CD8-positive, alpha-beta T cell (primary cell): ENCODE measurements at regions of chr1 and their contacts with region 1.

Region 1: DNA sequence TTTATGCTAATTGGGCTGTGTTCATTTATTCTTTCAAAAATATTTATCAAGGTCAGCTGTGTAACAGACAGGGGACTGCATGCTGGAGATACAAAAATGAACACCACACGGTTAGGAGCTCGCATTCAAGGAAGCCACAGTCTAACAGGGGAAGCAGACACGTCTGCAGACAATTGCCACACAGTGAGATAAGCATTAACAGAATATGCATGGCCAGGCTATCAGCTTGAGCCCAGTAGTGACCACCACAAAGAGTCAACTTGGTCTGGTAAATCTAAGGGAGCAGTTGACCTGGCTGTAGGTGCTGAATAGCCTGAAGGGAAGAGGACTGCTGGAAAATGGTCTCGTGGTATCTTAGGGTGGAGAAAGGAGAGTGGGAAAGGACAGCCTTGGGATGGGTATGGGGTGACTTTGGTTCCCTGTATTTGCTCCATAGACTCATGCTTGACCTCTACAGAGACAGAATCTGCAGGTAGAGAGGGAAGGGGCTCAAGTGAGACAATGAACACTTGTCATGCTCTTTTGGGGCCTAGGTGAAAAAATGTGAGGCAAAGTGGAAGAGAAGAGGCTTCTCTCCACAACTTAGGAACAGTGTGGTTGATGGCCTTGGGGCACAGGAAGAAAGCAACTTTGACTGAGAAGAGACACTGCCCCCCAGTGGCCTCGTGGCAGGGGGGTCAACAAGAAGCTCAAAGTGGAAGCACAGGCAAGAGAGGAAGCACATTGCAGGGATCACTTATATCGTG is 7.6 kb upstream of the NPL start:
- DNase-seq: peak; percentile 39 to 77 (median 66)
- ATAC-seq: peak; percentile 80
- H3K4me3 ChIP-seq: no peak overlapping the region
- H3K4me3 Mint-ChIP-seq: no peak overlapping the region
- H3K27ac ChIP-seq: no peak overlapping the region
- H3K27ac Mint-ChIP-seq: no peak overlapping the region
- H3K4me1 ChIP-seq: no peaks in the 10 kb centered on the region
- H3K4me1 Mint-ChIP-seq: peaks cover 3% of the 10 kb centered on the region
- H3K27me3 ChIP-seq: no peaks in the 10 kb centered on the region
- H3K27me3 Mint-ChIP-seq: peaks cover 2% of the 10 kb centered on the region
- CTCF ChIP-seq: peak; percentile 62

Region 2: DNA sequence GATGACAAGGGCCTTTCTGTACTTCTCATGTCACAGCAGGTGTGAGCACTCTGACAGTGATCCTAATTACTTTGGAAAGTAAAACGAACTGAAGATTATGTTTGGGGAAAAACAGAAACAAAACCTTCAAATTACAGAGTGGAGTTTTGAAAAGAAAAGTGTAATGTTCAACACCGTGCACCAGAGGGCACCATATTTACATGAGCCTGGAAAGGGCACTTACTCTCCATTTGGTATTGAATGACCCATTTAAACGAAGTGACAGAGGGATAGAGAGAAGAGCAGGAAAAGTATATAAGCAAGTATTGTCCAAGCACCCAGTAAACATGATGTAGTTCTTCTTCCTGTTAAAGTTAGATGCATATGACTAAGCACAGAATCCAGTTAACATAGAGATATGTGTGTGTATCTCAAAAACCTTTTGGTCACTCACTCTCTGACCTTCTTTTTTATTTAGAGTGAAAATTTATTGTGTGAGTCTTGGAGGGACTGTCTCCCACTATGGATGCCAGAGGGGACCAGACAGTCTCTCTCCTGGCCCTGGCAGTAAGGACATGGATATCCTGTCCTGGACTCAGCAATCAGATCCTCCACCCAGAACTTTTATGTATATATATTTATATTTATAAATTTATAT is 335.9 kb before region 1 on chr1:
- CTCF ChIA-PET with region 1: interaction called, 3 read pairs
- POLR2A ChIA-PET with region 1: no interaction called
- intact Hi-C with region 1: loop called in 1 of 2 experiments (anchors 1 kb)
- DNase-seq: peak in 2 of 9 experiments; percentile 37 to 55
- ATAC-seq: no peak
- H3K4me3 ChIP-seq: no peak overlapping the region
- H3K4me3 Mint-ChIP-seq: no peak overlapping the region
- H3K27ac ChIP-seq: no peak overlapping the region
- H3K27ac Mint-ChIP-seq: no peak overlapping the region
- H3K4me1 ChIP-seq: no peaks in the 10 kb centered on the region
- H3K4me1 Mint-ChIP-seq: no peaks in the 10 kb centered on the region
- H3K27me3 ChIP-seq: no peaks in the 10 kb centered on the region
- H3K27me3 Mint-ChIP-seq: peaks cover 7% of the 10 kb centered on the region
- CTCF ChIP-seq: peak; percentile 67